IMR-90 (cell line): ENCODE measurements at regions of chr6 and their contacts with region 1.

Region 1: DNA sequence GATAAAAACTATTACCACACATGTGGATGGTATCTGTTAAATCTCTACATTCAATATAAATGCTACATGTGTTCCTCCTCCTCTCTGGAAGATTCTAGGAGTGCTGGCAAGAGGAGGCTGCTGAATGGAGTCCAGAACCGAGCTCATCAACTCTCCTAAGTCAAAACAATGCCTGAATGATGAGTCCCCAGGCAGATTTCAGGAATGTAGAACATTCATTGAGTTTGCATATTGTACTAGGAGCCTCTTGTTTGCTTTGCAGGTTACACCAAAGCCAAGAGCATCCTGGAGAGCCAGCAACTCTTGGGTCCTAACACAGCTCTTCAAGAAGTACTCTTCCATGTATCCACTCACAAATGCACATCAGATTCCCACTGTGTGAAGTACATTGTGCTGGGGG is 117.6 kb upstream of the UST start:
- DNase-seq: peak; percentile 44
- ATAC-seq: peak; percentile 63
- H3K4me3 ChIP-seq: no peak overlapping the region
- H3K27ac ChIP-seq: no peak overlapping the region
- H3K4me1 ChIP-seq: no peaks in the 10 kb centered on the region
- H3K27me3 ChIP-seq: no peaks in the 10 kb centered on the region; the same call in 1 of the 2 replicates
- CTCF ChIP-seq: no peak
- POLR2A ChIP-seq: no peak
- RAD21 ChIP-seq: no peak

Region 2: DNA sequence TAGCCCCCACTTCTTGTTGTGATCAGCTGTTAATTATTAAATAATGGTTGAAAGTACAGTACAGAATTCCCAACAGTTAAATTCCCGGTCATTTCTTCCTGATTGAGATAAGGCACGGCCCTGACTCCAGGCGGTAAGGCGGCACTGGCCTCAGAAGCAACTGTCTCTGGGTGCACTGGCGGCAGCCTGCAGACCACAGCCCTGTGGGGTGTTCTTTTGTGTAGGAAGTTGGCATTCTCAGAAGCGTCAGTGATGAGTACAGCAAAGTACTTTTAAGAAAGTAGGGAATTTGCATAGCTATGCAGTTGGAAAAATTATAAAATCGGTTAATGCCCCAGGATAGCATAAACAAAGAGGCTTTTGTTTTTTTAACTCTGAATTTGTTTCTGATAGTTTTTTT is 1070.2 kb before region 1 on chr6:
- CTCF ChIA-PET with region 1: no interaction called
- POLR2A ChIA-PET with region 1: no interaction called
- dilution Hi-C with region 1: no loop called
- in situ Hi-C with region 1: no loop called
- intact Hi-C with region 1: no loop called
- DNase-seq: peak; percentile 5
- ATAC-seq: peak; percentile 62
- H3K4me3 ChIP-seq: no peak overlapping the region
- H3K27ac ChIP-seq: no peak overlapping the region
- H3K4me1 ChIP-seq: peaks cover 2% of the 10 kb centered on the region; the same call in 1 of the 2 replicates
- H3K27me3 ChIP-seq: no peaks in the 10 kb centered on the region
- CTCF ChIP-seq: no peak
- POLR2A ChIP-seq: no peak
- RAD21 ChIP-seq: no peak

Region 3: DNA sequence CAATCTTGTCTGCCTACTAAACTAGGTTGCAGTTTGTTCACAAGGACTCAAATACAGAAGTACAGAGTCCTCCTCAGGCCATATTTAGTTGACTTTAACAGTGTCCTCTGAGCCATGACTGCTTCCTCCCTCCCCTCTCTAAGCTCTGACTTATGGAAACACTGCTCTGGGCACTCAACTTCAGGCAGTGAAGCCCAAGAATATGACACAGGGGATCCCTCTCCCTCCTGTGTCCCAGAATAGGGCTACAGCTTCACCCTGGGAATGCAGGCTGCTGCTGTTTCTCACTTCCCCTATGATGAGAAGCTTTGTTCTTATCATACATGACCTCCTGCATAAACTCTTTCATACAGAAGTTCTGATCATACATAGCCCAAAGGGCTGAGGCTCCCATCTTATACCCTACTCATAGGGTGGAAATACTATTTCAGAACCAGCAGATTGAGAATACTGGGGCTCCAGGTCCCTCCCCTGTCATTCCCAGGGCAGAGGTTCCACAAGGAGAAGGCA is 20.3 kb after region 1 on chr6:
- CTCF ChIA-PET with region 1: no interaction called
- POLR2A ChIA-PET with region 1: no interaction called
- dilution Hi-C with region 1: no loop called
- in situ Hi-C with region 1: no loop called
- intact Hi-C with region 1: loop called (anchors 2 kb)
- DNase-seq: no peak
- ATAC-seq: no peak
- H3K4me3 ChIP-seq: no peak overlapping the region
- H3K27ac ChIP-seq: no peak overlapping the region
- H3K4me1 ChIP-seq: no peaks in the 10 kb centered on the region
- H3K27me3 ChIP-seq: no peaks in the 10 kb centered on the region; the same call in 1 of the 2 replicates
- CTCF ChIP-seq: no peak
- POLR2A ChIP-seq: no peak
- RAD21 ChIP-seq: no peak

Region 4: GRCh38 chr6:149301063-149301462 is 671.9 kb after region 1 on chr6:
- CTCF ChIA-PET with region 1: no interaction called
- POLR2A ChIA-PET with region 1: no interaction called
- dilution Hi-C with region 1: no loop called
- in situ Hi-C with region 1: no loop called
- intact Hi-C with region 1: no loop called
- DNase-seq: no peak
- ATAC-seq: no peak
- H3K4me3 ChIP-seq: no peak overlapping the region
- H3K27ac ChIP-seq: no peak overlapping the region
- H3K4me1 ChIP-seq: no peaks in the 10 kb centered on the region
- H3K27me3 ChIP-seq: peaks cover 9% of the 10 kb centered on the region
- CTCF ChIP-seq: no peak
- POLR2A ChIP-seq: no peak
- RAD21 ChIP-seq: no peak